ENCODE measurements at regions of chr2 and their contacts with region 1.

Region 1: DNA sequence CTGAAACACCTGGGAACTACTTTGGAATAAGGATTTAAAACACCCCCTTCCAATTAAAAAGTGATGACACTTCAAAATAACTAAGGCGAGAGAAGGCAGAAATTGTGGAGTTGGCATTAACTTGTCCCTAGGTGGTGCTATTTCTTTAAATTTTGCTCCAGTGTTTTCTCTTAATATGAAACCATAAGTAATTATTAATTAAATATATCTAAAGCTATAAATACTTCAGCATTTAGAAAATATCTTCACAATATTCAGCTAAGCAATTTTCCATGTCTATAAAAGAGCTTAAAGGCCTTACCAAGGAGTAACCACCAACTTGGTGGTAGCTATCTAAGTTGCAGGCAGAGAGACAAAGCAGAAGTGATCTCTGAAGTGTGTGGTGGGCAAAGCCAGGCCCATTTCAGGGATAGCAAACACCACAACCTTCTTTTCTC is 186.8 kb upstream of the PGAP1 start:
- DNase-seq: peak; percentile 65
- H3K4me3 ChIP-seq: no peak overlapping the region
- H3K27ac ChIP-seq: no peak overlapping the region
- H3K4me1 ChIP-seq: no peaks in the 10 kb centered on the region
- H3K27me3 ChIP-seq: no peaks in the 10 kb centered on the region
- CTCF ChIP-seq: peak; percentile 24 to 41
- POLR2A ChIP-seq: no peak

Region 2: DNA sequence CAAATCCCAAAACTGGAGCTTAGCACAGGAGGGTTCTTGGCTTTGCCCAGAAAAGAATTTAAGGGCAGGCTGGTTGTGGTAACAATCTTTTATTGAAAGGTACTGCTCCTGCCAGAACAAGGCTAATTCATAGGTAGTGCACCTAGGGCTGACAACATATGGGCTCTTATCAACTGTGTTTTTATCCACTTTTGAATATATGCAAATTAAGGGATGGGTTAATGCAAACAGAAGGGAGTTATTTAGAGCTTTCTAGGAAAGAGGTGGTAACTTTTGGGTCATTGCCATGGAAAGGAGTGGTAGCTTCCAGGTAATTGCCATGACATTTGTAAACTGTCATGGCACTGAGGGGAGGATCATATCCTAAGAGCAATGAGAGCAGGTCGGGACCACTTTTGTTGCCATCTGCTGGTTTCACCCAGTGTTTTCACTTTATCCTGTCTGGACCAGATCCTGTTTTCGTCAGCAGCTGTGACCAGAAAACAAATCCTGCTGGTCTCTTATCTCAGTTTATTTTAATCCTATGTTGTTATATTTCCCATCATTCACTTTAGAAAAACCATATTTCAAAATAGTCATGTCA is 305.1 kb before region 1 on chr2:
- CTCF ChIA-PET with region 1: no interaction called
- POLR2A ChIA-PET with region 1: no interaction called
- dilution Hi-C with region 1: no loop called
- intact Hi-C with region 1: no loop called
- DNase-seq: peak; percentile 45
- H3K4me3 ChIP-seq: no peak overlapping the region
- H3K27ac ChIP-seq: no peak overlapping the region
- H3K4me1 ChIP-seq: no peaks in the 10 kb centered on the region
- H3K27me3 ChIP-seq: peaks cover 4 to 8% of the 10 kb centered on the region in 2 experiments
- CTCF ChIP-seq: no peak
- POLR2A ChIP-seq: no peak

Region 3: DNA sequence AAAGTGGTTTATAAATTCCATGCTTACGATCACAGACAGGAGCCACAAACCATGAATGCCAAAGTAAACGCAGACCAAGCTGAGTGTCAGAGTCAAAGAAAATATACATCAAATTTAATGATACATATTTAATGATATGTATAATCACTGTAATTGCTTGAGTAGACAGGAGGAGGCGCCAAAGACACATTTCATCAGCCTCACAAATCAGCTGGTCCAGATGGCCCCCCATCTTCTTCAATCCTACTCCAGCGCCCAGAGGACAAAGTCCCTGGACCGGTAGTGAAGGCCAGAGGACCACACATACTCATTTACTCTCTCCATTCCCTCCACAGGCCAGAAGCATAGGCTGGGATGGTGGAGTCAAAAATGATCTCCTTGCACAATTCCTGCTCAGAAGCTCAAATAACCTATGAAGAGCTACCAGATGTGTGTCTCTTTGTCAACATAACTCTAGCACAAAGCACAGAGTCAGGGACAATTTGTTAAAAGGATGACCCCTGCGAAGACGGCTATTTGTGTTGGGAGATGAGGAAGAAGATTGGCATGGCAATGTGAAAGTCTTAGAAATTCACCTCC is 37.4 kb before region 1 on chr2:
- CTCF ChIA-PET with region 1: interaction called, 10 read pairs
- POLR2A ChIA-PET with region 1: no interaction called
- dilution Hi-C with region 1: no loop called
- intact Hi-C with region 1: loop called (anchors 2 kb)
- DNase-seq: no peak
- H3K4me3 ChIP-seq: no peak overlapping the region
- H3K27ac ChIP-seq: no peak overlapping the region
- H3K4me1 ChIP-seq: peaks cover 10% of the 10 kb centered on the region
- H3K27me3 ChIP-seq: no peaks in the 10 kb centered on the region
- CTCF ChIP-seq: peak; percentile 20 to 52
- POLR2A ChIP-seq: no peak

Region 4: GRCh38 chr2:197137231-197137630 is 23.9 kb after region 1 on chr2:
- CTCF ChIA-PET with region 1: interaction called, 56 read pairs
- POLR2A ChIA-PET with region 1: no interaction called
- dilution Hi-C with region 1: no loop called
- intact Hi-C with region 1: no loop called
- DNase-seq: peak; percentile 79
- H3K4me3 ChIP-seq: peak overlapping the region in 1 of 3 experiments; percentile 9
- H3K27ac ChIP-seq: peak overlapping the region; percentile 71
- H3K4me1 ChIP-seq: peaks cover 25% of the 10 kb centered on the region
- H3K27me3 ChIP-seq: no peaks in the 10 kb centered on the region
- CTCF ChIP-seq: no peak
- POLR2A ChIP-seq: no peak

Region 5: DNA sequence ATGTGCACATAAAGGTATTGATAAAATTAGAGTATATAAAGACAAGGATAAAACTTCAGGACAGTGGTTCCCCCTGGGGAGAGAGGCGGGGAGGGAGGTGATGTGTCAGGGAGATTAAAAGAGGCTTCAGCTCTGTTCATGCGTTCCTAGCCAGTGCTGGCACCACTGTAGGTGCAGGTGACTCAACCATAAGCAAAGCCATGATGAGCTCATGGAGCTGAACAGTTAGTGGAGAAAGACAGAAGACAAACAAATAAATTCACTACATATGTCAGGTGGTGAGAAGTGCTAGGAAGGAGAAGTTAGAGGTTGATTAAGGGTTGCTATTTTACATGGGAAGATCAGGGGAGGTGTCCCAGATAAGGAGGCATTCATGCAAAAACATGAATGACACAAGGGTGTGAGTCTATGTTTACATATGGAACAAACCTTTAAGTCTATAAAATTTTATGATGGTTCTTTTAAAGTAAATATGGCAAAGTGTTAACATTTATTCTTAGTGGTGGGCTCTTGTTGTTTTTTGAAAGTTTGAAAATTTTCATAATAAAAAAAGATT is 61.3 kb after region 1 on chr2:
- CTCF ChIA-PET with region 1: interaction called, 267 read pairs
- POLR2A ChIA-PET with region 1: no interaction called
- dilution Hi-C with region 1: no loop called
- intact Hi-C with region 1: no loop called
- DNase-seq: no peak
- H3K4me3 ChIP-seq: no peak overlapping the region
- H3K27ac ChIP-seq: no peak overlapping the region
- H3K4me1 ChIP-seq: peaks cover 6% of the 10 kb centered on the region
- H3K27me3 ChIP-seq: no peaks in the 10 kb centered on the region
- CTCF ChIP-seq: no peak
- POLR2A ChIP-seq: no peak

Region 6: DNA sequence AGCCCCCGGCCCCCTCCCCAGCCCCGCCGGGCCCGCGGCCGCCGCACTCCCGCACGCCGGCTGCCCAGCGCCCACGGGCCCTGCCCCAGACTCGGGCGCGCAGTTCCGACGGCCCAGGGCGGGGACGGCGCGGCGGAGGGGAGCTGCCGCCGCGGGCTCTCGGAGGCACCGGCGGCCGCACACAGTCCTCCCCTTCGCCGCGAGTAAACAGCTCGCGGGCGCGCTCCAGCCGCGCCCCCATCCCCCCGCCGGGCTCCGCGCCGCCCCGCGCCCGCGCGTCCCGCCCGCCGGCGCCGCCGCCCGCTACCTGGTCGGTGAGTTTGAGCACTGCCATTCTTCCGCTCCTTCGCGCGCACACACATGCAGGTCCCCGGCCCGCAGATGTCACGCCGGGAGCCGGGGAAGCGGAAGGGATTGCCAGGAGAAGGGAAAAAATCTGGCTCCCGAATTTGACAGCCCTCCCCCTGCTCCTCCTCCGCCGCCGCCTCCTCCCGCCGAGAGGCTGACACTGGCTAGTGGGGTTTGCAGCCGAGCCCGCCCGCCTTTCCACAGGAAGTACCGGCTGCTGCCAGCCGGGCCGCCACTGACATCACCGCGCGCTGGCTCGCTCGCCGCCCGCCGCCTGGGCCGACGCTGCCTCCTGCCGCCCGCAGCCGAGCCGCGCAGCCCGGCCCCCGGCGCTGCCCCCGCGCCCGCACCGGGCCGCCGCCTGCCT is 197.1 kb after region 1 on chr2 and contains the start of gene ANKRD44:
- CTCF ChIA-PET with region 1: interaction called, 54 read pairs
- POLR2A ChIA-PET with region 1: no interaction called
- dilution Hi-C with region 1: no loop called
- intact Hi-C with region 1: loop called (anchors 1 kb)
- DNase-seq: peak; percentile 72
- H3K4me3 ChIP-seq: peak within 1 kb of the TSS; percentile 65 to 91 (median 85)
- H3K27ac ChIP-seq: no peak within 1 kb of the TSS
- H3K4me1 ChIP-seq: peaks cover 12% of the 10 kb centered on the region
- H3K27me3 ChIP-seq: peaks cover 11 to 16% of the 10 kb centered on the region in 2 experiments
- CTCF ChIP-seq: no peak
- POLR2A ChIP-seq: no peak
- total RNA-seq, gene ANKRD44: 6.1 and 8.1 TPM in 2 replicates

Region 7: GRCh38 chr2:197378494-197379307 is 265.4 kb after region 1 on chr2:
- CTCF ChIA-PET with region 1: interaction called, 33 read pairs
- POLR2A ChIA-PET with region 1: no interaction called
- dilution Hi-C with region 1: no loop called
- intact Hi-C with region 1: loop called (anchors 1 kb)
- DNase-seq: peak; percentile 36
- H3K4me3 ChIP-seq: no peak overlapping the region
- H3K27ac ChIP-seq: no peak overlapping the region
- H3K4me1 ChIP-seq: no peaks in the 10 kb centered on the region
- H3K27me3 ChIP-seq: peaks cover 0 to 3% of the 10 kb centered on the region in 2 experiments
- CTCF ChIP-seq: peak; percentile 57 to 64
- POLR2A ChIP-seq: no peak